ENCODE measurements at regions of chr1 and their contacts with region 1.

Region 1: GRCh38 chr1:219566951-219567947 is 45.7 kb downstream of the ZC3H11B start:
- DNase-seq: no peak
- H3K4me3 ChIP-seq: no peak overlapping the region
- H3K27ac ChIP-seq: no peak overlapping the region
- H3K4me1 ChIP-seq: no peaks in the 10 kb centered on the region
- H3K27me3 ChIP-seq: no peaks in the 10 kb centered on the region
- CTCF ChIP-seq: peak in 2 of 3 experiments; percentile 43 to 54; a peak in 3 of 4 replicates
- EP300 ChIP-seq: no peak
- POLR2A ChIP-seq: no peak
- RAD21 ChIP-seq: peak; percentile 76 to 77

Region 2: DNA sequence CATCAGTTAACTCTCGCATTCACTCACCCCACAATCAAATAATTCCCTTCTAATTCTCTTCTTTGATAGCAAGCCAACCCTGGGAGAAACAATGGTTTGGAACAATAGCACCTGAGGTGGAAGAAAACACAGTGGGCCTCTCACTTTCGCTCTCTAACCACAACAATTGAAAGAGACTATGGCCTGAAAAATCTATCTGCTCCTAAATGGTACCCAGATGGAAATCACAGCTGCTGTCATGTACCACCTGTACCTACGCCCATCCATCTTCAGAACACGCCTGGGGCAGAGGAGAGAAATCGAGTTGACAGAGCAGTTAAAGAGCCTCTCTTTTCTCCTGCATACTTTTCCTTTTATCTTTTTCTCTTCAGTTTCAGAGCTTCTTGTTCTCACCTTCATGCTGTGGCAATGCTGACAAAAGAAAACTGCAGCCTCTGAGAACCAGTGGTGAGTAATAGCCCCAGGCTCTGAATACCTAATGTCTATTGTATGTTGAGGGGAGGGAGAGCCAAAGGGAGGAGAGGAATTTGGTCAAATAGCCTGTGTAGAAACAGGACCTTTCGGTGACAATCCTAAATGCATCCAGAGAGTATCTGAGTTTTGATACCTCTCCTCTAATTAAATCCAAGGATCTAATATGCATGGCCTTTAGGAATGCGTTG is 12.1 kb before region 1 on chr1:
- CTCF ChIA-PET with region 1: interaction called, 20 read pairs
- POLR2A ChIA-PET with region 1: interaction called, 3 read pairs
- DNase-seq: peak in 1 of 2 experiments; percentile 44
- H3K4me3 ChIP-seq: 0 out of 8 replicates have a peak overlapping the region, but pooled peaks of 1 of the 4 experiments have one; percentile 5
- H3K27ac ChIP-seq: no peak overlapping the region
- H3K4me1 ChIP-seq: peaks cover 0 to 6% (median 2%) of the 10 kb centered on the region in 4 experiments; a peak in 2 of 7 replicates
- H3K27me3 ChIP-seq: no peaks in the 10 kb centered on the region
- CTCF ChIP-seq: no peak
- EP300 ChIP-seq: no peak
- POLR2A ChIP-seq: no peak
- RAD21 ChIP-seq: no peak

Region 3: DNA sequence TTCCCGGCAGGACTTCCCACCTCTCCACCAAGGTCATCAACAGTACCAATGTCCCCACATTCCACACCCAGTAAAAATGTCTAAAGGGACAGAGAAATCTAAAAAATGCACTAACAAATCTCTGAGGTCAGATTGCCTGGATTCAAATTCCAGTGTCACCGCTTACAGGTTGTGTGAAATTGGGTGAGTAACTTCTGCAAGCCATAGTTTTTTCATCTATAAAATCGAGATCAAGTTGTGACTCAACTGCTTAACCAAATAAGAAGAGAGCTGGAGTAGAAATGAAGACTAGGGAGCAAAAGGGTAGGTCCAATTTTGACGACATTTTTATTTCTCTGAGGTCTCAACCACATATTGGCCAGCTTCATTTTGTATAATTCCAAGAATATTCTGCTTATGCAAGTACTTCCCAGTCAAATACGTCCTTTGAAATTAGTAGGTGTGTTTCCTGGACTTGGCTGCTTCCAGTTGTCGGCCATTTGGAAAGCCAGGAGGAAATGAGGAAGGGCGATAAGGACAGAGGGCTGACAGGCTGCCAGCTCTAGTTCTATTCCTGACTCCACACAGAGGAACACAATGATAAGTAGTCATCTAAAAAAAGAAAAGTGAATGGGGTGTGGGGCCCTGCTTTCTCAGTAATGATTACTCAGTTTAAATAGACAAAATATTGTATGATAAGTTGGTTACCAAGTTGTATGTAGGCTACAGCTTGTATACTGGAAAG is 103.3 kb after region 1 on chr1:
- CTCF ChIA-PET with region 1: no interaction called
- POLR2A ChIA-PET with region 1: no interaction called
- DNase-seq: no peak
- H3K4me3 ChIP-seq: no peak overlapping the region
- H3K27ac ChIP-seq: no peak overlapping the region
- H3K4me1 ChIP-seq: no peaks in the 10 kb centered on the region
- H3K27me3 ChIP-seq: no peaks in the 10 kb centered on the region
- CTCF ChIP-seq: no peak
- EP300 ChIP-seq: no peak
- POLR2A ChIP-seq: no peak
- RAD21 ChIP-seq: no peak

Measured in H1 (cell line).